ENCODE measurements at regions of chr17 and their contacts with region 1.

Region 1: GRCh38 chr17:49101054-49101947 is 31.3 kb upstream of the B4GALNT2 start:
- DNase-seq: no peak
- ATAC-seq: peak; percentile 56
- H3K4me3 ChIP-seq: no peak overlapping the region
- H3K27ac ChIP-seq: 0 out of 2 replicates have a peak overlapping the region, but pooled peaks have one; percentile 8
- H3K4me1 ChIP-seq: peaks cover 9% of the 10 kb centered on the region
- H3K27me3 ChIP-seq: no peaks in the 10 kb centered on the region
- CTCF ChIP-seq: no peak

Region 2: DNA sequence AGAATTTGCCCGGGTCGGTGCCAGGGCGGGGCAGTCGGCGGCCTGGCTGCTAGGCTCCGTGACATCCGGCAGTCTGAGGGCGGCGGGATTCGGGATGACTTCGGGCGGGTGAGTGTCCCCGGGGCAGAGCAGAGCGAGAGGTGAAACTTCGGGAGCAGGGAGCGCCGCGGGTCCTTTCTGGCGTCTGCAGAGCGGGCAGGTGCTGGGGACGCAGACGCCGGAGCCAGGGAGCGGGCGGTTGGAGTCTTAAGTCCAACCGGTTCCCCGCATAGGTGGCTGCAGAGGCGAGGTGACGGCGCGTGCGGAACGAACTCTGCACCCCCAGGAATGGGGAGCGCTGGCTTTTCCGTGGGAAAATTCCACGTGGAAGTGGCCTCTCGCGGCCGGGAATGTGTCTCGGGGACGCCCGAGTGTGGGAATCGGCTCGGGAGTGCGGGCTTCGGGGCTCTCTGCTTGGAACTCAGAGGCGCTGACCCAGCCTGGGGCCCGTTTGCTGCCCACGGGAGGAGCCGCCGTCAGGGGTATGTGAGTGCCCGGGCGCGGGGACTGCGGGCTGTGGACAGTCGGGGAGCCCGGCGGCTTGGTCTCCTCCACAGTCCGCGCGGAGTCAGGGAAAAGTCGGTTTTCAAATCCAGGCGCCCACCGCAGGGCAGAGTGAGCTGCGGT is 31.5 kb after region 1 on chr17 and contains the start of gene B4GALNT2:
- CTCF ChIA-PET with region 1: interaction called, 10 read pairs
- POLR2A ChIA-PET with region 1: no interaction called
- in situ Hi-C with region 1: no loop called
- intact Hi-C with region 1: no loop called
- DNase-seq: no peak
- ATAC-seq: no peak
- H3K4me3 ChIP-seq: no peak within 1 kb of the TSS
- H3K27ac ChIP-seq: no peak within 1 kb of the TSS
- H3K4me1 ChIP-seq: no peaks in the 10 kb centered on the region
- H3K27me3 ChIP-seq: no peaks in the 10 kb centered on the region
- CTCF ChIP-seq: no peak
- total RNA-seq, gene B4GALNT2: not detected